ENCODE measurements at regions of chr1 and their contacts with region 1.

Region 1: DNA sequence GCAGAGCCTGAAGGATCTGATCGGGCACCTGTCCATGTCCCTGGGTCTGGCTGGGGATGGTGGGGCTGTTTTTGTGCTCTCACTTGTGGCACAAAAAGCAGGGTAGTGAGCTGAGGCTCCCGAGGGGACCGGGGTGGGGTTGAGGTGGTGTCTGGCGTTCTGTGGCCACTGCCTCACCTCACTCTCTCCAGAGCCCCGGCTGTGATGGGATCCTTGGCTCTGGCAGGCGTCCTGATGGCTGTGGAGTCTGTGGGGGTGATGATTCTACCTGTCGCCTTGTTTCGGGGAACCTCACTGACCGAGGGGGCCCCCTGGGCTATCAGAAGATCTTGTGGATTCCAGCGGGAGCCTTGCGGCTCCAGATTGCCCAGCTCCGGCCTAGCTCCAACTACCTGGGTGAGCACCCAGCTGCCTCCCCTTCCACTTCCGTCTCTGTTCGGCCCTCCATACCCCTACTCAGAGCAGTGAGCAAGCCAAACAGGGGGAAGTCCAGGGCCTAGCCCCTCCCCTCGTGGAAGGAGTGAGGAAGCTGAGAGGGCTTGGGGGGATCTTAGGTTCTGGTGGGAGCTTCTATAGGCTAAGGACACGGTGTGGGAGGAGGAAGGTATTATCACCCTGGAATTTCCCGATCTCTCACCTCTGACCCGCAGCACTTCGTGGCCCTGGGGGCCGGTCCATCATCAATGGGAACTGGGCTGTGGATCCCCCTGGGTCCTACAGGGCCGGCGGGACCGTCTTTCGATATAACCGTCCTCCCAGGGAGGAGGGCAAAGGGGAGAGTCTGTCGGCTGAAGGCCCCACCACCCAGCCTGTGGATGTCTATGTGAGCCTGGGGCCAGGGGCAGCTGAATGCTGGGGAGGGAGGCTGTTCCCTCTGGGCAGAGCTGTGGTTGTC is 7.0 kb downstream of the ADAMTSL4 start:
- DNase-seq: no peak
- ATAC-seq: no peak
- H3K4me3 ChIP-seq: no peak overlapping the region
- H3K27ac ChIP-seq: no peak overlapping the region
- H3K4me1 ChIP-seq: peaks cover 34 to 85% of the 10 kb centered on the region in 2 experiments
- H3K27me3 ChIP-seq: no peaks in the 10 kb centered on the region
- CTCF ChIP-seq: no peak
- EP300 ChIP-seq: no peak
- POLR2A ChIP-seq: peak; percentile 54
- RAD21 ChIP-seq: no peak

Region 2: DNA sequence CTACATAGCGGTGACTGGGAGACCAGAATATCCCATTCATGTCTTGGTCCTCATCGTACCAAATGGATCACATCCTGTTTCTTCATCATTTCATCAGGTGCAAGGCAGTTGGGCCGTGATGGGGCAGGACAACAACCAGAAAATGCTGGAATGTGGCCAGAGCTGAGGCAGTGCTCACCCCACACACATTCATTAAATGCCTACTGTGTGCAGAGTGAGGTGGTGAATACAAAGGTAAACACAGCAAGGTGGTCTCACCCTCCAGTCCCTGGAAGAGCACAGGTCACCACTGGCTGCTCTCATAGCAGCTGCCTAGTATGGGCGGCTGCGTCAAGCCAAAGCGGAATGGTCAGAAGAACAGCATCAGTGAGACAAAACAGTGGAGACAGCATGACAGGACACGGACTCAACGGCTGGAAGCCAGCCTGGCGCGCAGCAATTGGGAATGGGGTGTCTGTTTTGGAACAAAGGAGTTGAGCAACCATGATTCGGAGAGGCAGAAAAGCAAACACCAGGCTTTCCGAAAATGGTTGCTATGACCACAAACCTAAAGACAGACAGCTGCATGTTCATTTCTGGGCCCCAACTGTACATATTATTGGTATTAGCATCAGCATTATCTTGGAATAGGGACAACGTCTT is 12.6 kb before region 1 on chr1:
- CTCF ChIA-PET with region 1: no interaction called
- POLR2A ChIA-PET with region 1: interaction called, 12 read pairs
- in situ Hi-C with region 1: no loop called
- intact Hi-C with region 1: no loop called
- DNase-seq: peak in 1 of 4 experiments; percentile 22
- ATAC-seq: no peak
- H3K4me3 ChIP-seq: no peak overlapping the region
- H3K27ac ChIP-seq: peak overlapping the region; percentile 87
- H3K4me1 ChIP-seq: peaks cover 30 to 47% of the 10 kb centered on the region in 2 experiments
- H3K27me3 ChIP-seq: no peaks in the 10 kb centered on the region
- CTCF ChIP-seq: no peak
- EP300 ChIP-seq: no peak
- POLR2A ChIP-seq: no peak
- RAD21 ChIP-seq: no peak